ENCODE measurements at regions of chr5 and their contacts with region 1.

Region 1: DNA sequence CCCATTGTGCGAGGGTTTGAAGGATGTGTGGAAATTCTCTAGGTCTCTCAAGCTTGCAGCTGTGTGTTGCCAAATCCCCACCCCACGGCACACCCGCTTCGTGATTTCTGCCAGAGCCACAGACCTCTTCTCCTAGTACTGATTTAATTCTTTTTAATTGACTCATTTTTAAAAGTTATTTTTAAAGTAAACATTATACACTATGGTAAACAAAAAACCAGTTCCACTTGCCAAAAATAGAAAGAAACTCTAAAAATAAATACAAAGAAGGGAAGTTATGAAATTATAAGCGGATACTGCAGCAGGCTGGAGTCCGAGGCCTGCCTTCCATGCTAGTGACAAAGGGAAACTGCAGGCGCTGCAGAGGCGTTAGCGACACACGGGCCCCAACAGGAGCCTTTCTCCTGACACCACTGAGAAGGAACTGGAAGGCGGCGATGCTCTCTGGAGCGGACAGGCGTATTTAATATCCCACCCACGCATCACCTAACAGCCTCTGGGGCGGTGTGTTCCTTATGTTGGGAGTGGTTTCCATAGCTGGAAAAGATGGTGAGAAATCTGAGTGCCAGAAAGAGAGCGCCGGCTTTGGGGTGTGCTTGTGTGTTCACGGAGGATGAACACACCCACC is 122.5 kb downstream of the COL23A1 start:
- DNase-seq: peak in 4 of 5 donors; percentile 46 to 55 (median 48)
- ATAC-seq: peak; percentile 13 to 76 (median 68)
- H3K4me3 ChIP-seq: peak overlapping the region in 6 of 12 donors; percentile 3 to 31 (median 16)
- H3K27ac ChIP-seq: peak overlapping the region in 8 of 12 donors; percentile 11 to 72 (median 26)
- H3K4me1 ChIP-seq: peaks cover 0 to 26% (median 14%) of the 10 kb centered on the region in 12 donors
- H3K27me3 ChIP-seq: no peaks in the 10 kb centered on the region
- CTCF ChIP-seq: no peak
- POLR2A ChIP-seq: no peak

Region 2: DNA sequence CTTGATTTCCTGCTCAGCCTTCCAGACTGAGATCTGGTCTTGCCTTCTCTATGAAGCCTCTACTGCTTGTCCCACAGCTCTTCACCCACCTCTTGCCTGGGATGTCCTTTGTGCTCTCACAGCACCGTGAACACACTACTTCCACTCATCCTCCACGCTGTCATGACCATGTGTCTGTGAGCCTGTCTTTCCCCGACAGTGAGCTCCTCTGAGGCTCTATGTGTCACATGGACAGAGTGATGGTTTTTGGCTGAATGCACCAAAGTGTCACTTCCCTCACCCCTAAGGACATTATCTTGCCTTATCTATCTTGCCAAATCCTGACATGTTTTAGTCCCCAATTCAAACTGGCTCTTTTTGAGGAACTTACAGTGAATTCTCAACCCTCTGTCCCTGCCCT is 246.4 kb before region 1 on chr5:
- intact Hi-C with region 1: no loop called
- DNase-seq: no peak
- ATAC-seq: no peak
- H3K4me3 ChIP-seq: no peak overlapping the region
- H3K27ac ChIP-seq: peak overlapping the region in 1 of 12 donors; percentile 27
- H3K4me1 ChIP-seq: peaks cover 0 to 25% (median 0%) of the 10 kb centered on the region in 12 donors
- H3K27me3 ChIP-seq: no peaks in the 10 kb centered on the region
- CTCF ChIP-seq: no peak
- POLR2A ChIP-seq: no peak

Region 3: DNA sequence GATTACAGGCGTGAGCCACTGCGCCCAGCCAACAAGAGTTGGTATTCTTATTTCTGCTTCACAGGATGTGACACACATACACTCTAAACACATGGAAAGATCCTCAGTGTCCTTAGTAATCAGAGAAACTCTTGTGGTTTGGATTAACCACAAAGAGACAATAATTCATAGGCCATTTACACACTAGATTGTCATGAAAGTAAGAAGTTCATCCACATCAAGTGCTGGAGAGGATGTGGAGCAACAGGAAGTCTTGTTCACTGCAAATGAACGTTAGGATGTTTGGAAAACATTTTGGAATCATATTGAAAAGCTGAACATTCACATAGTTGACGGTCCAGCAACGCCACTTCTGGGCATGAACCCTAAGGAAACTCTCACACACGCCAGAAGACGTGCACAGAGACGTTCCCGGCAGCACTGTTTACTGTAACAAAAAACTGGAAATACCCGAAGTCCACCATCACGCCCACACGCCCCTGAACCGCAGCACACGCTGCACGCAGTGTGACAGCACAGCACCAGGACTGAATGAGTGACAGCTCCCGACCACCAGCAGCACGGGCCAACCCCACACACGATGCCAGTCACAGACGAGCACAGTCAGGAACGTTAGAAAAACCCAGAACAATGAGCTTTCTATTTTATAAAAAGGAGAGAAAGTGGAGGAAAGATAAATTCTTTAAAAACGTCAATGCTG is 34.9 kb after region 1 on chr5:
- intact Hi-C with region 1: loop called in 1 of 10 experiments (anchors 2 kb)
- DNase-seq: no peak
- ATAC-seq: no peak
- H3K4me3 ChIP-seq: no peak overlapping the region
- H3K27ac ChIP-seq: no peak overlapping the region
- H3K4me1 ChIP-seq: no peaks in the 10 kb centered on the region
- H3K27me3 ChIP-seq: no peaks in the 10 kb centered on the region
- CTCF ChIP-seq: no peak
- POLR2A ChIP-seq: no peak

Region 4: DNA sequence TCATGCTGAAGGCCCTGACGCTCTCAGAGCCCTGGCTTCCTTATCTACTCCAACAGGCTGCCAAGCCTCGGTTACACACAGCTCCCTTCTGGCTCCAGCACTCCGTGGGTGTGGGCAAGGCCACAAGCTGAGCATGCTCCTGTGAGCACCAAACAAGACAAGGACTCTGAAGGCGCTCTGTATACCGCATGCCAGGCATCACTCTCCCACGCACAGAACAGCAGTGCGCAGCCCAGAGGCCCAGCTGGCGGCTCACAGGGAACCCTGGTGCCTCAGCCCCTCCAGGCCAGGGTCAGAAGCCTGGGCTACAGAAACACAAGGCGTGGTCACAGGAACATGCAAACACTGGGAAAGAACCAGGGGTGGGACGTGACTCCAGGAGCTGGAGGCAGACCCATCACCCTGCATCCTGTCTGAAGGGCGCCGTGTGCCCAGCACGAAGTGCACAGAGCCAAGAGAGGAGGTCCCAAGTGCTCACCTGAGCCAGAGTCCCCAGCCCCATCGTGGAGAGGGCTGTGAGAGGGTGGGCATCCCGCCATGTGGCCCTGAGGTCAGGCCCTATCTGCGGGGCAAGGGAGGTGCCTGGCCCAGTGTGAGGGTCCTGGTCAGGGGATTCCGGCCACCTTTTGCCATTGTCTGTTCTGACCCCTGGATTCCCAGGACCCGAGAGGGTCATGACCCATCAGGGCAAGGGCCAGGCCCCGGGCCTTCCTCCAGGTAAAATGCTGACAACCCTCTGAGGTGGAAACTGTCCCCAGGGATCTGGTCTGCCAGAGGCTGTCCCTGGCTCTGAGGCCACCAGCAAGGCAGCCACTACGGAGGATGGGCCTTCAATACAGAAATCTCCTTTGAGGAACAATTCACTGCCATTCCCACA is 67.9 kb after region 1 on chr5:
- intact Hi-C with region 1: loop called in 1 of 10 experiments (anchors 5 kb)
- DNase-seq: peak; percentile 63 to 91 (median 77)
- ATAC-seq: peak; percentile 82 to 98 (median 96)
- H3K4me3 ChIP-seq: no peak overlapping the region
- H3K27ac ChIP-seq: peak overlapping the region in 11 of 12 donors; percentile 20 to 83 (median 60)
- H3K4me1 ChIP-seq: peaks cover 0 to 16% (median 4%) of the 10 kb centered on the region in 12 donors
- H3K27me3 ChIP-seq: no peaks in the 10 kb centered on the region
- CTCF ChIP-seq: no peak
- POLR2A ChIP-seq: no peak

Region 5: GRCh38 chr5:179954434-179954833 is 1486.8 kb after region 1 on chr5:
- intact Hi-C with region 1: no loop called
- DNase-seq: no peak
- ATAC-seq: no peak
- H3K4me3 ChIP-seq: no peak overlapping the region
- H3K27ac ChIP-seq: no peak overlapping the region
- H3K4me1 ChIP-seq: peaks cover 0 to 11% (median 0%) of the 10 kb centered on the region in 12 donors
- H3K27me3 ChIP-seq: no peaks in the 10 kb centered on the region
- CTCF ChIP-seq: no peak
- POLR2A ChIP-seq: no peak

Measured in heart left ventricle (tissue), 16 donors.